Activated CD4-positive, alpha-beta memory T cell treated with anti-CD3 and anti-CD28 coated beads for 36 hours (primary cell): ENCODE measurements at regions of chr6 and their contacts with region 1.

Region 1: DNA sequence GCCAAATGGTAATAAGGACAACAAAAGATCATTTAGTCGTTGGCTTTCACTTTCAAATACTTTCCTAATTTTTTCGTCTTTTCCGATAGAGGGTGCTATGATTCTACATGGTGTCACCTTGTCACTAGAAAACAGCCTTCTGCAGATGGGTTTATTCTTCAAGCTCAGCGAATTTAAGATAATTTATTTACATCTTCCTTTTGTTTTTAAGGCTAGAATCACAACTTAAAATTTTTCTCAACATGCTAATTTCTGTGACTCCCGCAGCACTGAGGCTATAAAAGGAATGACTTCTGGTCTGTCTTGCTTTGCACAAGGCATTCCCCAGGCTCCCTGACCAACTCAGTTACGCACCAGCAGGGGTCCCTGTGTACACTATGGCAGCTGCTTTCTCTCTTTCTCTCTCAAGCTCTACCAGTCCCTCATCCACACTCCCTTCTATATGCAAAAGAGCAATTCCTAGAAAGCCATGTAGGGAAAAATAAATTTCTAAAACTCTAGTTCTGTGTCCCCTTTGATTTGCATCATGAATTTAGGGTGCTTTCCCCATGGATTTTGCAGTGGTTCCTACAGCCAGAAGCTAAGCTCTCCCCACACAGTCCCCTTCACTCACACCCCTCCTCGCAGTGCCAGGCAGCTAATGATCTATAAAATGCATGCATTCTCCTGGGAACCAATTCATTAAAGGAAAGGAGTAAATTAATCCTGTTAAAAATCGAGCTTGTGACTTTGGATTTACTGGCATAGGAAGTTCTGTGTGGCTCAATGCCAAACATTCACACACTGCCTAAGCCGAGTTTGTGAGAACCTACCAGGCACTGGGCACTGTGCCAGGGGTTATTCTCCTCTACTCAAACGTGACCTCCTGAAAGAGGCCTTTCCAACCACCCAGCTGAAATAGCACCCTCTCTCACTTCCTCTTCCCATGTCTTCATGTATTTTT is 74.5 kb downstream of the DCDC2 start:
- DNase-seq: peak; percentile 51
- H3K4me3 Mint-ChIP-seq: no peak overlapping the region
- H3K27ac Mint-ChIP-seq: no peak overlapping the region
- H3K4me1 Mint-ChIP-seq: peaks cover 7% of the 10 kb centered on the region
- H3K27me3 Mint-ChIP-seq: peaks cover 4% of the 10 kb centered on the region

Region 2: GRCh38 chr6:24339932-24340331 is 56.6 kb after region 1 on chr6:
- CTCF ChIA-PET with region 1: no interaction called
- POLR2A ChIA-PET with region 1: no interaction called
- intact Hi-C with region 1: no loop called
- DNase-seq: no peak
- H3K4me3 Mint-ChIP-seq: no peak overlapping the region
- H3K27ac Mint-ChIP-seq: no peak overlapping the region
- H3K4me1 Mint-ChIP-seq: no peaks in the 10 kb centered on the region
- H3K27me3 Mint-ChIP-seq: peaks cover 10% of the 10 kb centered on the region

Region 3: GRCh38 chr6:24359640-24360454 is 76.5 kb after region 1 on chr6:
- CTCF ChIA-PET with region 1: interaction called, 20 read pairs
- POLR2A ChIA-PET with region 1: no interaction called
- intact Hi-C with region 1: loop called (anchors 1 kb)
- DNase-seq: peak; percentile 93
- H3K4me3 Mint-ChIP-seq: peak overlapping the region; percentile 69
- H3K27ac Mint-ChIP-seq: no peak overlapping the region
- H3K4me1 Mint-ChIP-seq: peaks cover 25% of the 10 kb centered on the region
- H3K27me3 Mint-ChIP-seq: peaks cover 6% of the 10 kb centered on the region

Region 4: DNA sequence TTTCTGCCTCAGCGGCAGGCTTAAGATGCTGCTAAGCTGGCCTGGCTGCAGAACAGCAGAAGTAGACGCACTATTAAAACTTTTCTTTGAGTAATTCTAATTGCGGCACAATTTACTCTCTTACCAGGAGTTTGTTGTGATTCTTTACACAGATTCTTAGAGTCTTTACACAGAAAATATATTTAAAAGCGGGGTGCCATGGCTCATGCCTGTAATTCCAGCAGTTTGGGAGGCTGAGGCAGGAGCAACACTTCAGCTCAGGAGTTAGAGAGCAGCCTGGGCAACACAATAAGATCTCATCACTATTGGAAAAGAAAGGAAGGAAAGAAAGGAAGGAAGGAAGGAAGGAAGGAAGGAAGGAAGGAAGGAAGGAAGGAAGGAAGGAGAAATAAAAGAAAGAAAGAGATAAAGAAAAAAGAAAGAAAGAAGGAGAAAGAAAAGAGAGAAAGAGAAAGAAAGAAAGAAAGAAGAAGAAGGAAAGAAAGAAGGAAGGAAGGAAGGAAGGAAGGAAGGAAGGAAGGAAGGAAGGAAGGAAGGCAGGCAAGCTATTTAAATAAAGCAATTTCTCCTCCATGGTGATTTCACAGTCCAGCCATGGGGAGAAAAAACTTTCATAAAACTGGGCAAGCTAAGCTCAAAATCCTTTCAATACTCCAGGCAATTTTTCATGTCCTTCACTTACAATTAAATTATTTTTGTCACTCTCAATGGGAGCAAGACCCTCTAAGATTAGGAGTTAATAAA is 98.3 kb after region 1 on chr6:
- CTCF ChIA-PET with region 1: no interaction called
- POLR2A ChIA-PET with region 1: no interaction called
- intact Hi-C with region 1: no loop called
- DNase-seq: no peak
- H3K4me3 Mint-ChIP-seq: no peak overlapping the region
- H3K27ac Mint-ChIP-seq: no peak overlapping the region
- H3K4me1 Mint-ChIP-seq: no peaks in the 10 kb centered on the region
- H3K27me3 Mint-ChIP-seq: peaks cover 5% of the 10 kb centered on the region

Region 5: GRCh38 chr6:24391756-24392405 is 108.6 kb after region 1 on chr6:
- CTCF ChIA-PET with region 1: interaction called, 5 read pairs
- POLR2A ChIA-PET with region 1: no interaction called
- intact Hi-C with region 1: loop called (anchors 1 kb)
- DNase-seq: no peak
- H3K4me3 Mint-ChIP-seq: no peak overlapping the region
- H3K27ac Mint-ChIP-seq: no peak overlapping the region
- H3K4me1 Mint-ChIP-seq: no peaks in the 10 kb centered on the region
- H3K27me3 Mint-ChIP-seq: peaks cover 9% of the 10 kb centered on the region

Region 6: GRCh38 chr6:24402697-24403501 is 119.6 kb after region 1 on chr6 and contains the start of gene MRS2:
- CTCF ChIA-PET with region 1: no interaction called
- POLR2A ChIA-PET with region 1: no interaction called
- intact Hi-C with region 1: loop called (anchors 5 kb)
- DNase-seq: peak; percentile 83
- H3K4me3 Mint-ChIP-seq: peak within 1 kb of the TSS; percentile 85
- H3K27ac Mint-ChIP-seq: peak within 1 kb of the TSS; percentile 28
- H3K4me1 Mint-ChIP-seq: peaks cover 22% of the 10 kb centered on the region
- H3K27me3 Mint-ChIP-seq: peaks cover 18% of the 10 kb centered on the region
- total RNA-seq, gene MRS2: 20.0 to 23.4 TPM

Region 7: GRCh38 chr6:24431045-24431451 is 147.7 kb after region 1 on chr6:
- CTCF ChIA-PET with region 1: interaction called, 5 read pairs
- POLR2A ChIA-PET with region 1: no interaction called
- intact Hi-C with region 1: loop called (anchors 1 kb)
- DNase-seq: peak; percentile 22
- H3K4me3 Mint-ChIP-seq: no peak overlapping the region
- H3K27ac Mint-ChIP-seq: no peak overlapping the region
- H3K4me1 Mint-ChIP-seq: no peaks in the 10 kb centered on the region
- H3K27me3 Mint-ChIP-seq: no peaks in the 10 kb centered on the region

Region 8: GRCh38 chr6:24504602-24505586 is 221.6 kb after region 1 on chr6:
- CTCF ChIA-PET with region 1: no interaction called
- POLR2A ChIA-PET with region 1: no interaction called
- intact Hi-C with region 1: no loop called
- DNase-seq: no peak
- H3K4me3 Mint-ChIP-seq: no peak overlapping the region
- H3K27ac Mint-ChIP-seq: no peak overlapping the region
- H3K4me1 Mint-ChIP-seq: no peaks in the 10 kb centered on the region
- H3K27me3 Mint-ChIP-seq: no peaks in the 10 kb centered on the region

Region 9: DNA sequence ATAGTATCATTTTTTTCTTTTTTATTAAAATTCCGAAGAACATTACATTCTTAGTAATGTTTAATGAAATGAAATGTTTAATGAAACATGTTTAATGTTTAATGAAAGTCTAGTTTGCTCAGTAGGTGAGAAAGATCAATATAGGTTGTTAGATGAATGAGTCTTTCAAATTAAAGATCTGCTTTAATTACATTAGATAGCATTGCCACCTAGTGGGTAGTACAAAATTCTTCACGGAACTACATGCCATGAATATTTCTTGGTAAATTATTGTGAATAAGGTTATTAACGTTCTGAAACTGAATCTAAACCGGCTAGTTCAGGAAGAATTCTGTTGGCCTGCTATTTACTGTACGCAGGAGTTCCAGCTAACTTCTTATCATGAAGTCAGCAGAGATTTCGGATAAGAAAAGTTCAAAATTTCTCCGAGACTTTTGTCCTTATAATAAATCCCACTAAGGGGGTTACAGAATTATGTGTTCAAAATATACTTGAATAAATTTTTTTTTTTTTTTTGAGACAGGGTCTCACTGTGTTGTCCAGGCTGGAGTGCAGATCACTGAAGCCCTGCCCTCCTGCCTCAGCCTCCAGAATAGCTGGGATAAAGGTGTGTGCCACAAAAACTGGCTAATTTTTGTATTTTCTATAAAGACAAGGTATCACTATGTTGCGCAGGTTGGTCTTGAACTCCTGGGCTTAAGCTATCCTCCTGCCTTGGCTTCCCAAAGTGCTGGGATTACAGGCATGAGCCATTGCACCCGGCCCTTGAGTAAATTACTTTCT is 483.6 kb after region 1 on chr6:
- CTCF ChIA-PET with region 1: interaction called, 3 read pairs
- POLR2A ChIA-PET with region 1: no interaction called
- intact Hi-C with region 1: loop called (anchors 10 kb)
- DNase-seq: no peak
- H3K4me3 Mint-ChIP-seq: no peak overlapping the region
- H3K27ac Mint-ChIP-seq: no peak overlapping the region
- H3K4me1 Mint-ChIP-seq: peaks cover 4% of the 10 kb centered on the region
- H3K27me3 Mint-ChIP-seq: no peaks in the 10 kb centered on the region

Region 10: DNA sequence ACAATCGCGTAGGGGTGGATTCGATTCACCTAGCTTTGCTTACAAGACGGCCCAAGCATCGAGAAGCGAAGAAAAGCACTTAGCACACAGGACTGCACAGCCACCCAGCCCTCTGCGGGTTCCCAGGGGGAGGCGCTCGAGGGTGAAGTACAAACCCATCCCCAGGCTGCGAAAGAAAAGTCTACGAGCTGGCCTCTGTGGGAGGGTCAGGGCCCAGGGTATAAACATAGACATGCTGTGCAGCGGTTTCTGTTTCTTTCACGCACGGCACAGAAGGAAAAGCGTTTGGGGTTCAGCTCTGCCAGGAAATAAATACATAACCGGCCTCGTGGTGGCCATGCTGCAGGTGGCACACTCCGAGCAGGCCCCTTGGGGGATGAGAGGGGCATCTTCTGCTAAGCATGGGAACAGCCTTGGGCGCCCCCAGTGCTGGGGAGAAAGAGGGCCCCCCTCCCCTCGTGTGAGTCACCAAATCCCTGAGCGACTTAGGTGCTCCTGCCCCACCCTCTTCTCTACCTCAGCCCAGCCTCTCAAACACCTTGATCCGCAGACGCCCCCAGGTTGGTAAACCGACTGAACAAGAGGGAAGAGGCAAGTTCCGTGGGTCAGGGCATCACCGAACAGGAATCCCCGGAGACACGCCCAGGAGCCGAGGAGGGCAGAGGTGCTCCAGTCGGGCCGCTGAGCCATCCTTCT is 744.1 kb after region 1 on chr6:
- CTCF ChIA-PET with region 1: no interaction called
- POLR2A ChIA-PET with region 1: no interaction called
- intact Hi-C with region 1: no loop called
- DNase-seq: peak; percentile 92
- H3K4me3 Mint-ChIP-seq: peak overlapping the region; percentile 70
- H3K27ac Mint-ChIP-seq: peak overlapping the region; percentile 96
- H3K4me1 Mint-ChIP-seq: peaks cover 75% of the 10 kb centered on the region
- H3K27me3 Mint-ChIP-seq: no peaks in the 10 kb centered on the region